Activated naive CD4-positive, alpha-beta T cell treated with anti-CD3 and anti-CD28 coated beads for 36 hours (primary cell): ENCODE measurements at regions of chr18 and their contacts with region 1.

Region 1: GRCh38 chr18:58676270-58676669 is 5.0 kb downstream of the MALT1 start:
- DNase-seq: no peak
- H3K4me3 Mint-ChIP-seq: peak overlapping the region; percentile 31
- H3K27ac Mint-ChIP-seq: peak overlapping the region; percentile 81
- H3K4me1 Mint-ChIP-seq: peaks cover 65% of the 10 kb centered on the region
- H3K27me3 Mint-ChIP-seq: no peaks in the 10 kb centered on the region

Region 2: DNA sequence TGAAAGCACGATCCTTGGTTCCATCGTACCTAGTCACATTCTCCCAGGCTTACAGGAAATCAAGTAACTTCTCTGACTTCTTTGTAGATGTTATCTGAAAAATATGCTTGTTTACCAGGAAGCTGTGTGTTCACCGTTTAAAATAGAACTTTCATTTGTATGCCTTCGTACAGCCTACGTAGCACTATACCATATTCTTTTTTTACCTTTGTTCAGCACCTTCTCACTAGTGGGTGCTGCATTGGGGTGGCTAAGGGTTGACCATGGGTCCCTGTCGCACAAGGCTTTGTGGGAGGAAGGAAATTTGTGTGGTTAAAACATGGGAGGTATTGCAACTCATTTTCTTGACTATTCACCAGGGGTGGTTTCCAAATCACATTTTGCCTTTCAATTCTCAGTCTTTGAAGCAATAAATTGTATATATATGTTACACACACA is 11.6 kb after region 1 on chr18:
- CTCF ChIA-PET with region 1: interaction called, 10 read pairs
- intact Hi-C with region 1: loop called (anchors 1 kb)
- DNase-seq: peak; percentile 64
- H3K4me3 Mint-ChIP-seq: peak overlapping the region; percentile 70
- H3K27ac Mint-ChIP-seq: peak overlapping the region; percentile 87
- H3K4me1 Mint-ChIP-seq: peaks cover 78% of the 10 kb centered on the region
- H3K27me3 Mint-ChIP-seq: no peaks in the 10 kb centered on the region

Region 3: DNA sequence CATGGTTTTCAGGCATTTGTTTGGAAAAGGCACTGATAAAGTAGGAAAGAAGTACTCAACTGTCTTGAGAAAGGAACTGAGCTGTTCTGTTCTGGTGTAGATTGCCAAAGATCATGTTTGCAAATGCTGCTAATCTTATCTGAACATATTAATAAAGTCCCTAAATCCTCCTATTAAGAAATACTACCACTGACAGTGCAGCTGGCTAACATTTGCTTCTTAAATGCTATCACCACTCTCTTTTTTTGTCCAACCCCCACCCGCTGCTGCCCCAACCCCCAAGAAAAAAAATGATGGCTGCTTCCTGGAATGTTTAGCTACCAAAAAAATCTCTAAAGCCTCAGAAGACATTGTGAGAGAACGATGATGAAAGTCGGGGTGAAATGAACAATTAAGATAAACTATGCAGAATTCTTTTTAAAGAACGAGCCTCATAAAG is 890.3 kb after region 1 on chr18:
- CTCF ChIA-PET with region 1: no interaction called
- intact Hi-C with region 1: no loop called
- DNase-seq: no peak
- H3K4me3 Mint-ChIP-seq: no peak overlapping the region
- H3K27ac Mint-ChIP-seq: no peak overlapping the region
- H3K4me1 Mint-ChIP-seq: no peaks in the 10 kb centered on the region
- H3K27me3 Mint-ChIP-seq: peaks cover 3% of the 10 kb centered on the region